PC-9 (cell line): ENCODE measurements at regions of chr3 and their contacts with region 1.

Region 1: GRCh38 chr3:187783098-187783497 is 37.8 kb upstream of the BCL6 start:
- DNase-seq: peak; percentile 47 to 98
- H3K4me3 ChIP-seq: no peak overlapping the region
- H3K27ac ChIP-seq: peak overlapping the region; percentile 62
- H3K4me1 ChIP-seq: peaks cover 23% of the 10 kb centered on the region
- H3K27me3 ChIP-seq: no peaks in the 10 kb centered on the region
- CTCF ChIP-seq: no peak

Region 2: DNA sequence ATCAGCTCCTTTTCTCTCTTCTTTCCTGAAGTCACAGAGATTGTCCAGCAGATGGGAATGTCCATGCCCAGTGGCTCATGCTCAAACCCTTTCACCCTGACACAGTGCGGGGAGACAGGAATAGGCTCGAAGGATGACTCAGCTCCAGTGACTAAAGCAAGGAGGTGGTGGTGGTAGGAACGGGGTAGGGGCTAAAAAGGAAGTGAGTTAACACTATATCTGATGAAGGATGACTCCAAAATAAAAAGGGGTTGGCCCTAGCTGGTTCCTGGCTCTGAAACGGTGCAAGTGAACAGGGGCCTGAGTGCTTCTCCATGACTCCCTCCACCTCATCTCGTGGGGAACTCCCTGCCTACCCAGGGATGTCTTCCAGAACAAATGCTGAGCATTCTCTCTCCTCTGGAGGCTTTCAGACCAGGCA is 203.4 kb after region 1 on chr3:
- CTCF ChIA-PET with region 1: no interaction called
- POLR2A ChIA-PET with region 1: interaction called, 23 read pairs
- intact Hi-C with region 1: no loop called
- DNase-seq: peak; percentile 68 to 84
- H3K4me3 ChIP-seq: no peak overlapping the region
- H3K27ac ChIP-seq: peak overlapping the region; percentile 64
- H3K4me1 ChIP-seq: peaks cover 26% of the 10 kb centered on the region
- H3K27me3 ChIP-seq: no peaks in the 10 kb centered on the region
- CTCF ChIP-seq: no peak